Mammary epithelial cell (primary cell): ENCODE measurements at regions of chr4 and their contacts with region 1.

Region 1: GRCh38 chr4:129264008-129264657 is 168.2 kb downstream of the C4orf33 start:
- DNase-seq: no peak
- H3K4me3 ChIP-seq: no peak overlapping the region
- H3K27ac ChIP-seq: no peak overlapping the region
- H3K4me1 ChIP-seq: no peaks in the 10 kb centered on the region
- H3K27me3 ChIP-seq: no peaks in the 10 kb centered on the region
- CTCF ChIP-seq: no peak

Region 2: DNA sequence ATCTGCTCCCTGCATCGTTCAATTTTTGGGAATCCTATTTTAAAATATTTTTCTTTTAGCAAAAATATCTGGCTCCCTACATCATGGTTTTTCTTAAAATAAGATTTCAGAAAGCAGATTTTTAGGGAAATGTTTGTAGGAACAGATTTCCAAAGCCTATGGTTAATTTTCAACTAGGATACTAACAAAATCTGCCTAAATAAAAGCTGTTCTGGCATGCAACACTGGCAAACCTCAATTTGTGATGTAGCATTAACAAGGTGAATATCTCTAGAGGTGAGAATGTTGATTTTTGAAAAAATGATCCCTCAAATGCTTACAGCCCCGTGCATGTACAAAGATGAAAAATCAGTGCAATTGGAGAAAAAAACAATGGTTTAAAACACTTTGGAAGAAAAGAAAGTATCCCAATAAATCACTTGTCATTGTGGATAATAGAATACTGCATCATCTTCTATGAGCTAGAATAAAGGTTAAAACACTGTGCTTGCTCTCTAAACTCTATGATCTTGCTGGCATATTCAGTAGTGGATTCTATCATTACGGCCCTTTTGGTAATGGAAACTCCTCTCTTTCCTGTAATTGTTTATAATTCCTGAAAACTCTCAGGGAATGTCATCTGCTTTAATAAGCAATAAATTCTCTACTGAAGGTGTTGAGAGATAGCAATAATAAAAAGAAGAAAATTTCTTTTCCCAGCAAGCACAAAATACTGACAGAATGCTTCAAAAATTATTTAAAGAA is 70.6 kb before region 1 on chr4:
- CTCF ChIA-PET with region 1: no interaction called
- dilution Hi-C with region 1: loop called (anchors 5 kb)
- in situ Hi-C with region 1: no loop called
- intact Hi-C with region 1: no loop called
- DNase-seq: no peak
- H3K4me3 ChIP-seq: no peak overlapping the region
- H3K27ac ChIP-seq: no peak overlapping the region
- H3K4me1 ChIP-seq: no peaks in the 10 kb centered on the region
- H3K27me3 ChIP-seq: no peaks in the 10 kb centered on the region
- CTCF ChIP-seq: no peak